ENCODE measurements at regions of chr11 and their contacts with region 1.

Region 1: GRCh38 chr11:65662799-65663638 is at the start of gene RELA:
- DNase-seq: peak; percentile 95
- H3K4me3 Mint-ChIP-seq: peak within 1 kb of the TSS; percentile 85
- H3K27ac Mint-ChIP-seq: peak within 1 kb of the TSS; percentile 94
- H3K4me1 Mint-ChIP-seq: peaks cover 37% of the 10 kb centered on the region
- H3K27me3 Mint-ChIP-seq: no peaks in the 10 kb centered on the region
- total RNA-seq, gene RELA: 66.9 to 68.5 TPM

Region 2: GRCh38 chr11:65652511-65653231 is 10.3 kb before region 1 on chr11:
- CTCF ChIA-PET with region 1: no interaction called
- intact Hi-C with region 1: loop called (anchors 1 kb)
- DNase-seq: peak; percentile 95
- H3K4me3 Mint-ChIP-seq: peak overlapping the region; percentile 80
- H3K27ac Mint-ChIP-seq: peak overlapping the region; percentile 94
- H3K4me1 Mint-ChIP-seq: peaks cover 46% of the 10 kb centered on the region
- H3K27me3 Mint-ChIP-seq: no peaks in the 10 kb centered on the region

Measured in activated naive CD4-positive, alpha-beta T cell treated with anti-CD3 and anti-CD28 coated beads for 36 hours (primary cell).